IMR-90 (cell line): ENCODE measurements at regions of chr9 and their contacts with region 1.

Region 1: GRCh38 chr9:92265159-92265558 is 28.3 kb downstream of the IARS1 start:
- DNase-seq: peak; percentile 32
- ATAC-seq: peak; percentile 61
- H3K4me3 ChIP-seq: no peak overlapping the region
- H3K27ac ChIP-seq: no peak overlapping the region
- H3K4me1 ChIP-seq: peaks cover 2% of the 10 kb centered on the region; the same call in 1 of the 2 replicates
- H3K27me3 ChIP-seq: no peaks in the 10 kb centered on the region
- CTCF ChIP-seq: no peak
- POLR2A ChIP-seq: no peak
- RAD21 ChIP-seq: no peak

Region 2: GRCh38 chr9:92300935-92301334 is 35.8 kb after region 1 on chr9:
- CTCF ChIA-PET with region 1: no interaction called
- POLR2A ChIA-PET with region 1: no interaction called
- dilution Hi-C with region 1: no loop called
- in situ Hi-C with region 1: loop called (anchors 5 kb)
- intact Hi-C with region 1: loop called (anchors 5 kb)
- DNase-seq: no peak
- ATAC-seq: no peak
- H3K4me3 ChIP-seq: no peak overlapping the region
- H3K27ac ChIP-seq: no peak overlapping the region
- H3K4me1 ChIP-seq: no peaks in the 10 kb centered on the region
- H3K27me3 ChIP-seq: no peaks in the 10 kb centered on the region
- CTCF ChIP-seq: no peak
- POLR2A ChIP-seq: no peak
- RAD21 ChIP-seq: no peak

Region 3: DNA sequence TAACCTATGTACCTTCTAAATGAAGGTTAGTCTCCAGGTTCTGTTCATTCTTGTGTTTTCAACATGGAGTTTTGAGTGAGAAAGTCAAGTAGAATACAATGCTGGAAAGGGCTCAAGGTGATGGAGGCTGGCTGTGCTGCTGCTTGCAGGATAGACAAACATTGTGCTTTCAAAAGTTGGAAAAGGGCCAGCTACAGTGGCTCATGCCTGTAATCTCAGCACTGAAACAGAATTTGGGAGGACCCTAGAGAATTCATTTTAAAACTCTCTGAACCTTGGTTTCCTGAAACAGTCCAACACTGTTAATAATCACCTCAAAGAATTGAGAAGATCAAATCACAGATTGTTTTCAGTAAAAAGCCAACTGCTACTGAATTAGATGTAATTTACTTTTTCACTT is 43.7 kb after region 1 on chr9:
- CTCF ChIA-PET with region 1: no interaction called
- POLR2A ChIA-PET with region 1: no interaction called
- dilution Hi-C with region 1: no loop called
- in situ Hi-C with region 1: loop called (anchors 5 kb)
- intact Hi-C with region 1: loop called (anchors 5 kb)
- DNase-seq: peak; percentile 34
- ATAC-seq: peak; percentile 27; the same call in 1 of the 2 replicates
- H3K4me3 ChIP-seq: no peak overlapping the region
- H3K27ac ChIP-seq: no peak overlapping the region
- H3K4me1 ChIP-seq: peaks cover 3% of the 10 kb centered on the region
- H3K27me3 ChIP-seq: no peaks in the 10 kb centered on the region
- CTCF ChIP-seq: no peak
- POLR2A ChIP-seq: no peak
- RAD21 ChIP-seq: no peak

Region 4: DNA sequence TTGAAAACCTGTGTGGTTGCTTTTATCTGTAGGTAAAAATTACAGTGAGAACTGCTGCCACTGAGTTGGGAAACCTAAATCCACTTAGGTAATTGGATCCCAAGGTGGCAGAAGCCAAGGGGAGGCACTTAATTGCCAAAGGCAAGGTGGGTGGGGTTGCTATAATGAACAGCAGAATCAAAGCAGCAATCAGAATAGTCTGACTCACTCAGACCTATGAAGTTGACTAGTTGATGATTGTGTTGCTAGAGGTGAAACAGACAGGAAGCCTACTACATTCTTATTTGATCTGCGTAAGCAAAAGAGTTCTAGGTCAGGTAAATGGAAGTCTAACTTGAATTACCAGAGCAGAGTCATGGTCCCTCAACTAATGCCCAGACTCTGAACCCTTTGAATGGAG is 516.8 kb after region 1 on chr9:
- CTCF ChIA-PET with region 1: no interaction called
- POLR2A ChIA-PET with region 1: no interaction called
- dilution Hi-C with region 1: no loop called
- in situ Hi-C with region 1: no loop called
- intact Hi-C with region 1: no loop called
- DNase-seq: no peak
- ATAC-seq: no peak
- H3K4me3 ChIP-seq: no peak overlapping the region
- H3K27ac ChIP-seq: no peak overlapping the region
- H3K4me1 ChIP-seq: no peaks in the 10 kb centered on the region
- H3K27me3 ChIP-seq: peaks cover 32% of the 10 kb centered on the region
- CTCF ChIP-seq: no peak
- POLR2A ChIP-seq: no peak
- RAD21 ChIP-seq: no peak